Colonic mucosa (tissue), 4 donors: ENCODE measurements at regions of chr4 and their contacts with region 1.

Region 1: DNA sequence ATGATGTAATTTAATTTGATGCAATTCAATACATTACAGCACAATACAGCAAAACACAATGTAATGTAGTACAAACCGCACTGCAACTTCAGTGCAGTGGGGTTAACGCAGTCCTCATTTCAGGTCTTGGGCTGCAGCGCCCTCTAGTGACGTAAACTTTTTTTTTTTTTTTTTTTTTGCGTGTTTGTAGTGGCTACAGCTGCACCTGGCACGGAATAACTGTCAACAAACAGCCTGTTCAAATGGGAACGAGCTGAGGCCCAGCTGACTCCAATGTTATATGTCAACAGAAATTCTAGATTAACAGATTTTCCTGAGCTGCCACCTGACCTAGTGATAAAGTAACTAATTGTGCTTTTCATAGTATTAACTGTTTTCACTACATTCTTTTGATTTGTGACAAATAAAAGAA is 33.5 kb upstream of the RASSF6 start:
- DNase-seq: peak; percentile 39
- H3K4me3 ChIP-seq: no peak overlapping the region
- H3K27ac ChIP-seq: no peak overlapping the region
- H3K4me1 ChIP-seq: no peaks in the 10 kb centered on the region
- H3K27me3 ChIP-seq: no peaks in the 10 kb centered on the region
- CTCF ChIP-seq: peak; percentile 55

Region 2: DNA sequence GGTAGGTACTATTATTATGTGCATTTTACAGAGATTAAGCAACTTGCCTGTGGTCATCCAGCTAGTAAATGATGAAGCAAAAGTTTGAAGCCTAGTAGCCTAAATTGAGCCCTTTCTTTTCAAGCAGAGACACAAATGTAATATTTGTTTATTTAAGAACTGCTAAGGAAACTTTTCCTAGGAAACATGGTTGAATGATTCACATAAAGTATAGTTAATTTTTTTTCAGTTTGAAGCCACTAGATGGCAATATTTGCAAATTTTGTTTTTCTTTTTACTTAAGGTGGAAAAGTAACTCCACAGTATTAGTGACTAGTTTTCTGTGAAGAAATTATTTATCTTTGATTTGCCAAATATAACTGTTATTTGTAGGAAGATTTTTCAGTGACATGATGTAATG is 342.3 kb before region 1 on chr4:
- intact Hi-C with region 1: loop called (anchors 10 kb)
- DNase-seq: no peak
- H3K4me3 ChIP-seq: no peak overlapping the region
- H3K27ac ChIP-seq: no peak overlapping the region
- H3K4me1 ChIP-seq: no peaks in the 10 kb centered on the region
- H3K27me3 ChIP-seq: no peaks in the 10 kb centered on the region
- CTCF ChIP-seq: no peak

Region 3: GRCh38 chr4:73573794-73574406 is 79.8 kb before region 1 on chr4:
- intact Hi-C with region 1: loop called (anchors 5 kb)
- DNase-seq: peak; percentile 76
- H3K4me3 ChIP-seq: no peak overlapping the region
- H3K27ac ChIP-seq: no peak overlapping the region
- H3K4me1 ChIP-seq: no peaks in the 10 kb centered on the region
- H3K27me3 ChIP-seq: no peaks in the 10 kb centered on the region
- CTCF ChIP-seq: peak; percentile 79

Region 4: DNA sequence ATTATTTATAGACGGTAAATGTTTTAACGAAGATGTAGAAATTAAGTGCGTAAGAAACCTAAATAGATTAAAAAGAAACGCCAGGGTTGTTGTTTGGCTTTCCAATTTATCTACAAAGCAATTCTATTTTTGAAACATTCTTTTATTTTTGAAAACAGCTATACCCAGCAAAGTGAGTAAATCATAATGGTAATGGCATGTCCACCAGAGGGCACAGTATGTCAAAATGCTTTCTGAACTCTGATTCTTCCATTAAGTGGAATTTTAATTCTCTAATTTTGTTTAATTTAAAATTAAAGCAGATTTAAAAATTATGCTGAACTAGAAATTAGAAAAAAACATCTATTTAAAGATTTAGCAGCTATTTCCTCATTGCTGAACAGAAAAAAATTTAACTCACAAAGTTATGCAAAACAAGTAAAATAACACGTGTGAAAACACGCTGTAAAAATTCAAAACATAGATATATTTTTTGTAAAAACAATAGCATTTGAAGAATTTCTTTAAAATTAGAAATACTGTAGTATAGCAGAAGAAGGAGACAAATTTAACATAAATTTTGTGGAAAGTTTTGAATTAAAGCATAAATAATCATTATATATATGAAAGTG is 60.0 kb before region 1 on chr4:
- intact Hi-C with region 1: loop called (anchors 2 kb)
- DNase-seq: no peak
- H3K4me3 ChIP-seq: no peak overlapping the region
- H3K27ac ChIP-seq: no peak overlapping the region
- H3K4me1 ChIP-seq: no peaks in the 10 kb centered on the region
- H3K27me3 ChIP-seq: no peaks in the 10 kb centered on the region
- CTCF ChIP-seq: peak; percentile 45

Region 5: GRCh38 chr4:73620115-73620792 is 33.4 kb before region 1 on chr4 and contains the start of gene RASSF6:
- intact Hi-C with region 1: no loop called
- DNase-seq: peak; percentile 90
- H3K4me3 ChIP-seq: peak within 1 kb of the TSS; percentile 42
- H3K27ac ChIP-seq: peak within 1 kb of the TSS; percentile 82
- H3K4me1 ChIP-seq: no peaks in the 10 kb centered on the region
- H3K27me3 ChIP-seq: no peaks in the 10 kb centered on the region
- CTCF ChIP-seq: no peak
- total RNA-seq, gene RASSF6: 13.8 to 38.9 TPM

Region 6: GRCh38 chr4:73816814-73817213 is 163.1 kb after region 1 on chr4:
- intact Hi-C with region 1: no loop called
- DNase-seq: no peak
- H3K4me3 ChIP-seq: no peak overlapping the region
- H3K27ac ChIP-seq: no peak overlapping the region
- H3K4me1 ChIP-seq: no peaks in the 10 kb centered on the region
- H3K27me3 ChIP-seq: no peaks in the 10 kb centered on the region
- CTCF ChIP-seq: no peak